ENCODE measurements at regions of chr11 and their contacts with region 1.

Region 1: DNA sequence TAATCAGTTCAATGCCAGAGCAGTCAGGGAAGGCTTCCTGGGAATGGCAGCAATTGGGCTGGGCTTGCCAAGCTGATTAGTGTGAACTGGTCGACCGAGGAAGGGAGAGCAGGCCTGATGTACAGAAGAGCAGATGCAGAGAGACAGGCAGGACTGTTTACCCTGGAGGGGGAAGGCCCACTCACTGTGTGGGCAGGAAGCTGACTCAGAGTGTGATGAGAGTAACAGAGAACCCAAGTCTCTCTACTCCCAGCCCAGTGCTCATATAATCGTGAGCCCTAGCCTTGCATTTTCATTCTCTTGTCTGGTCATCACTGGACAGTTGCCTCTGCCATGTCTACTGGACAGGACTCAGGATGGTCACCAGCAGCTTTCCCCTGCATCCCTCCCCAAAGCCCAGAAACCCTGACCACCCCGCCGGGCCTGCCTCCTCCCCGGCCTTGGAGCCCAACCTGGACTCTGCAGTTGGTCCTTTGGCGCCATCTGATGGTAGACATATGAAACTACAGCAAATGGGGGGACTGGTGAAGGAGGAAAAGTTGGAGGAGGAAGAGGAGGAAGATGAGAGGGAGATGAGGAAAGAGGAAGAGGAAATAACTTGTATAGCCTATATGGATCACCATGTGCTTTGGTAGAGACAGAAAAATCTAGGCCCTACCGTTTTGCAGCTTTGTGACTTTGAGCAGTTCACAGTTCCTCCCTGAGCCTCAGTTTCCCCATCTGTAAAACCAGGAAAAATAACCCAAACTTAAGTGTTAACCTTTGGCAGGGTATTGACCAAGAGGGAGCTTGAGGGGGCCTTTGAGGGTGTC is 43.4 kb upstream of the PRDM11 start:
- DNase-seq: peak; percentile 63
- H3K4me3 ChIP-seq: peak overlapping the region in 1 of 3 experiments; percentile 7
- H3K27ac ChIP-seq: no peak overlapping the region
- H3K4me1 ChIP-seq: peaks cover 13% of the 10 kb centered on the region
- H3K27me3 ChIP-seq: no peaks in the 10 kb centered on the region
- CTCF ChIP-seq: peak; percentile 88 to 97

Region 2: DNA sequence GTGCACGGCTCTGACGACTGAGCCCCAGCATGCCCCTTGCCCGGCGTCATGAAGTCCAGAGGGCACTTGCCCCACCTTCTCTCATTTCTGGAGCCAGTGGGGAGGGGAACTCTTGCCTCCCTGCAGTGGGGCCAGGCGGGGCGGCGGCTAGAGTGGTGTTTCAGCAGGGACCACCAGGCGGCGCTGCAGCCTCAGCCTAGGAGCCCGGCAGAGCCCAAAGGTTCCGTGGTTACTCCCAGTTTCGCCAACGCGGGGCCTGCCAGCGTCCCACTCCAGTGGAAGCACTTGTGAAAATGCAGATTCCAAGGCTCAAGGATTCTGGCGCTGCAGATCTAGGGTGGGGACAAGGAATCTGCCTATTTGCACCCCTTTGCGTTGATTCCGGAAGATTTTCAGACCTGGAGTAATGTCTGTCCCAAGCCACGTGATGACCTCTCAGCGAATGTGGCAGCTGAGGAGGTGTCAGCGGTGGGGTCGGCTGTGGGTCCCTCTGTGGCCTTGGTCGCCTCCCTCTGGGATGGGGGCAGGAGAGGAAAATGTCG is 481.8 kb before region 1 on chr11:
- CTCF ChIA-PET with region 1: no interaction called
- dilution Hi-C with region 1: no loop called
- in situ Hi-C with region 1: no loop called
- intact Hi-C with region 1: loop called (anchors 10 kb)
- DNase-seq: no peak
- H3K4me3 ChIP-seq: no peak overlapping the region
- H3K27ac ChIP-seq: no peak overlapping the region
- H3K4me1 ChIP-seq: no peaks in the 10 kb centered on the region
- H3K27me3 ChIP-seq: no peaks in the 10 kb centered on the region
- CTCF ChIP-seq: peak; percentile 83 to 94

Region 3: DNA sequence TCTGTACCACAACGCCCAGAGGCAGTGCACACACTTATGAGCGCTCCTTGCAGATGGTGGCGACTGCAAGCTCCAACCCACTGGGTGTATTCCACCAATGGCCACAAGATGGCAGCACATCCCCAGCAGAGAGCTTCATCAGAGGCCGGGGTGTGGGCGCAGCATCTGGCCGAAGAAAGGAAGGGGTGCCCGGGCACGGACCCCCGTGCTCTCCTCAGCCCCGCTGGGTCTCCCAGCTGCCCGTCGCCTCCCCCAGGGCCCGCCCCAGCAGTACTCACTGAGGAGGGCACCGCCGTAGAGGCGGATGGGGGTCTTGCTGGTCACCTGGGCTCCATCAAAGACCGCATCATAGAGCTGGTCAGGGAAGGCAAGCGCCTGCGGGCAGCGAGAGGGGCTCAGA is 166.5 kb before region 1 on chr11:
- CTCF ChIA-PET with region 1: interaction called, 9 read pairs
- dilution Hi-C with region 1: loop called (anchors 5 kb)
- in situ Hi-C with region 1: loop called in 1 of 2 experiments (anchors 5 kb)
- intact Hi-C with region 1: loop called (anchors 1 kb)
- DNase-seq: peak; percentile 50
- H3K4me3 ChIP-seq: no peak overlapping the region
- H3K27ac ChIP-seq: no peak overlapping the region
- H3K4me1 ChIP-seq: no peaks in the 10 kb centered on the region
- H3K27me3 ChIP-seq: no peaks in the 10 kb centered on the region
- CTCF ChIP-seq: peak; percentile 82 to 94

Region 4: GRCh38 chr11:45089676-45090499 is 13.1 kb before region 1 on chr11:
- CTCF ChIA-PET with region 1: no interaction called
- dilution Hi-C with region 1: no loop called
- in situ Hi-C with region 1: no loop called
- intact Hi-C with region 1: loop called (anchors 1 kb)
- DNase-seq: peak; percentile 40
- H3K4me3 ChIP-seq: no peak overlapping the region
- H3K27ac ChIP-seq: peak overlapping the region; percentile 15
- H3K4me1 ChIP-seq: peaks cover 16% of the 10 kb centered on the region
- H3K27me3 ChIP-seq: no peaks in the 10 kb centered on the region
- CTCF ChIP-seq: peak in 1 of 2 donors; percentile 24

Region 5: GRCh38 chr11:45332276-45332934 is 229.4 kb after region 1 on chr11:
- CTCF ChIA-PET with region 1: no interaction called
- dilution Hi-C with region 1: no loop called
- in situ Hi-C with region 1: loop called in 1 of 2 experiments (anchors 5 kb)
- intact Hi-C with region 1: no loop called
- DNase-seq: no peak
- H3K4me3 ChIP-seq: no peak overlapping the region
- H3K27ac ChIP-seq: no peak overlapping the region
- H3K4me1 ChIP-seq: no peaks in the 10 kb centered on the region
- H3K27me3 ChIP-seq: no peaks in the 10 kb centered on the region
- CTCF ChIP-seq: peak; percentile 38 to 60

Measured in mammary epithelial cell (primary cell).